ENCODE measurements at regions of chr5 and their contacts with region 1.

Region 1: DNA sequence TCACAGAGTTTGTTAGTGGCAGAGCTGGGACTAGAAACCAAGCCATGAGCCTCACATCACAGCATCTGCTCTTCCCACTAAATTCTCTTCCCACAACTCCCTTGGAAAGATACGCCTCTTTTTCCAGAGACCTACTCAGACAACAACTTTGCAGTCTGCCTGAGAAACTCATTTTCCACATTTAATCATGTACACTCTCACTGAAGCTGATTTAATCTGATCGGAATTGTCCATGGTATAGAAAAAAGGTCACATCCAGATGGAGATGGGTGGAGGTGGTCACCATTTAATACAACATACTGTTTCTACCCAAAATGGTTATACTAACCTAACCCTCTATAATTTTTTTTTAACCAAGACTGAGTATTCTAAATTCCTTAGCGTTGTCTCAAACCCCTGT is 366.2 kb downstream of the ENC1 start:
- DNase-seq: no peak
- ATAC-seq: no peak
- H3K4me3 ChIP-seq: no peak overlapping the region
- H3K27ac ChIP-seq: no peak overlapping the region
- H3K4me1 ChIP-seq: no peaks in the 10 kb centered on the region
- H3K27me3 ChIP-seq: no peaks in the 10 kb centered on the region
- CTCF ChIP-seq: no peak

Region 2: GRCh38 chr5:74294231-74294705 is 19.9 kb after region 1 on chr5:
- CTCF ChIA-PET with region 1: no interaction called
- POLR2A ChIA-PET with region 1: no interaction called
- intact Hi-C with region 1: loop called (anchors 1 kb)
- DNase-seq: no peak
- ATAC-seq: no peak
- H3K4me3 ChIP-seq: no peak overlapping the region
- H3K27ac ChIP-seq: no peak overlapping the region
- H3K4me1 ChIP-seq: peaks cover 5% of the 10 kb centered on the region; the same call in 1 of the 2 replicates
- H3K27me3 ChIP-seq: no peaks in the 10 kb centered on the region
- CTCF ChIP-seq: no peak

Measured in PC-3 (cell line).